ENCODE measurements at regions of chr1 and their contacts with region 1.

Region 1: DNA sequence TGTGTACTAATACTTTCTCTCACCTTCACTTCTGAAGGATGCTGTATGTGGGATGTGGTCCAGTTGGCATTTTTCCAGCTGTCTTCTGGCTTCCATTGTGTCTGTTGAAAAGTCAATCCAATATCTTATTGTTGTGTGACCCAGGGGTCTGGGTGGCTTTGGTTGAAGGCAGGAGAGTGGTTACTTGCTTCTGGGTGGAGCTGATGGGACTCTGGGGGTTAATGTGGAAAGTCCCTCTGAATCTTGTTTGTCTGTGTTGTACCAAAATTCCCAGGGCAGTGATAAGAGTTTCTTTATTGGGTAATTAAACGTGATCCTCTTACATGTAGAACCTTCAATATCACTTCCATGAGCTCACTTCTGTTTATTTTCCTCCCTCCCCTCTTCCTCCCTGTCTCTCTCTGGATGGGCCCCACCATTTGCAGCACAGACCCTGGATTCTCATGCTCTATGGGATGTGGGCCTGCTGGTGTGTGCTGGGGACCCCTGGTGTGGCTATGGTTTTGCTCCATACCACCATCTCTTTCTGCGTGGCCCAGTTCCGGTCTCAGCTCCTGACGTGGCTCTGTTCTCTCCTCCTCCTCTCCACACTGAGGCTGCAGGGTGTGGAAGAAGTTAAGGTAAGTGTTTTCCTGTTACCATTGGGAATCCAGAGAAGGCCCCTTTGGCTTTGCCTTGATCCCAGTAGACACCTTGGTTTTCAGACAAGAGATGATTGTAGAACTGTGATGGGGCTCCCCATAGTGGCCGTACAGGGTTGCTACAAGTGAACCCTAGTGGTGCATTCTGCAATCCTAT is 71.5 kb downstream of the HHAT start:
- DNase-seq: peak; percentile 56
- H3K4me3 ChIP-seq: no peak overlapping the region
- H3K27ac ChIP-seq: no peak overlapping the region
- H3K4me1 ChIP-seq: no peaks in the 10 kb centered on the region
- H3K27me3 ChIP-seq: no peaks in the 10 kb centered on the region
- CTCF ChIP-seq: peak; percentile 66

Region 2: DNA sequence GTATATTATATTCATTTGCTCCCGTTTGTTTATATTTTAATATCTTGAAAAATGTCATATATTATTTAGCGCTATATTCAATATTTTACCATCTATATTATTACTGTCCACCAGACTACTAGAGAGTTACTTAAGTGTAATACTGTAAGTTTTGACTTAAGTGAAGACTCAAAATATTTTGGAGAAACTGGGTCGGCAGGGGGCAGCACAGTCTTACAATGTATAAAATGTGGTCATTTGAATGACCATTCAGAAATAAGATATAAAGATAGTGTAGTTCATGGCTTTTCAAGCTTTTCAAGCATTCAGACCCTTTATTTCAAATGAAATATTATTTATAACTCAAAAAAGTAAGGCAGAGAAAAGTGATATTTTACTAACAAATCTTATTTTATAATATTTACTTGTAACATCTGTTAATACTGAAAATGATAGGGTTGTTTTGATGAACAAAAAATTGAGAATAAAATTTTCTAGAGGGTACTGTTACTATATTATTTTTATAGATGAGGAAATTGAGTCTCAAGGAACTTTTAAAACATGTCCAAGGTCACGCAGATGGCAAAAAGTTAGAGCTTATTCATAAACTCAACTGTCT is 256.7 kb before region 1 on chr1:
- intact Hi-C with region 1: loop called (anchors 5 kb)
- DNase-seq: peak; percentile 80
- H3K4me3 ChIP-seq: no peak overlapping the region
- H3K27ac ChIP-seq: no peak overlapping the region
- H3K4me1 ChIP-seq: no peaks in the 10 kb centered on the region
- H3K27me3 ChIP-seq: no peaks in the 10 kb centered on the region
- CTCF ChIP-seq: peak; percentile 70

Region 3: DNA sequence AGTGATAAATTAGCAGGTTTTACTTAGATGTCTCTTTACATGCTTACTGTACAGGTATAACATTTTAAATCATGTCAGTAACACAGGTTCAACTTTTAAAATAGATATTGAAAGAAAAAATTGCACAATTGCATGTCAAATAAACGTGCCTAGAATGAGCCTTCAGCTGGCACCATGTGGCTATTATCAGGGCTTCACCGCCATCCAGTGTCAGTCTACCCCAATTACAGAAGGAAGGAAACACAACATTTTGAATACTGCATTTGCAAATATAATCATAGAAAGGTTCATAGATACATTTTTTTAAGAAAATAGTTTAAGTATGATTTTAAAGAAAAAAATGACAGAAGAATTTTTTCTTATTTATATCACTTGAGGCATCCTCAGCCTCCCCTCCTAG is 215.2 kb before region 1 on chr1:
- intact Hi-C with region 1: no loop called
- DNase-seq: no peak
- H3K4me3 ChIP-seq: no peak overlapping the region
- H3K27ac ChIP-seq: no peak overlapping the region
- H3K4me1 ChIP-seq: no peaks in the 10 kb centered on the region
- H3K27me3 ChIP-seq: no peaks in the 10 kb centered on the region
- CTCF ChIP-seq: no peak

Region 4: GRCh38 chr1:210311726-210312493 is 88.3 kb before region 1 on chr1:
- intact Hi-C with region 1: loop called (anchors 5 kb)
- DNase-seq: no peak
- H3K4me3 ChIP-seq: no peak overlapping the region
- H3K27ac ChIP-seq: no peak overlapping the region
- H3K4me1 ChIP-seq: no peaks in the 10 kb centered on the region
- H3K27me3 ChIP-seq: no peaks in the 10 kb centered on the region
- CTCF ChIP-seq: no peak

Region 5: DNA sequence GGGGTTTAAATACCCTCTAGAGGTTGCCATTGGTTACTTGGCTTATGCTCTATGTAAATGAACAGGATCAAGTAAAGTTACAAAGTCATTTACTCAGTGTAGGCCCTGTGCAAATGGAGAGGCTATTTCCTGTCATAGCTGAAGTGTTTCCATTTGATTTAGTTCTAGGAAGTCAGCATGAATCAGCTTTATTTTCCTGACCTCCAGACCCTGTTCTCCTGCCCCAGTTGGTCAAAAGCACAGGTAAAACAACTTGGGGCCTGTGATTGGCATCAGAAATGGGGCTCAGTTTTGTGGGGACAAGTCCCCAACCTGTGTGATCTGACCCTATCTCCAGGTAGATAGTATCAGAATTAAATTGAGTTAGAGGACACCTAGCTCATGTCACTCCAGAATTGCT is 168.4 kb after region 1 on chr1:
- intact Hi-C with region 1: no loop called
- DNase-seq: no peak
- H3K4me3 ChIP-seq: no peak overlapping the region
- H3K27ac ChIP-seq: no peak overlapping the region
- H3K4me1 ChIP-seq: no peaks in the 10 kb centered on the region
- H3K27me3 ChIP-seq: no peaks in the 10 kb centered on the region
- CTCF ChIP-seq: no peak

Region 6: DNA sequence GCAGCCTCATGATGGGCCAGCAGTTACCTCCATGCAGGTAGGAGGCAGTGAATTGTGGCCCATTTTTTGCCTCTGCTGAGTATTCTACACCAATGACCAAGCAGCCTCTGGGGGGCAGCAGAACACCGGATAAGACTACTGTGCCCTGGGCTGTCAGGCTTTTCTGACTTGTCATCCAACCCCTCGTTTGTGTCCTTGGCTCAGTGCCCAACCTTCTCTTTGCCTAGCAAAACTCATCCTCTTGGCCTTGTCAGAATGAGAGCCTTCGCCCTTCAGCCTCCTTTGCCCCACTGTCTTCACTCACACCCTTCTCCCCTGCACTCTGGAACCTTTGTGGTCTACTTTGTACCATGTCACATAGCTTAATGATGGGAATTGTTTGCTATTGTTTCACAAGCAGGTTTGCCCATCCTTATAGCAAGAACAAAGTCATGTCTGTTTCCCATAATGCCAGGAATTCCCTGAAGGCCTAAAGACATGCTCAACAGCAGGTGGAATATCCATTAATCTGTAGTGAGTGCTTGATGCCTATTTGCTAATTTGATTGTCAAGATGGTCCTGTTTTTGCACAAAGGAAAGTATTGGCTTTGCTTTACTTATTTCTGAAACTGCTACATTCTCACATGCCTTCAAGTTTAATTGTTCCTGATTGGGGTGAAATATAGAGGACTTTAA is 184.3 kb after region 1 on chr1:
- intact Hi-C with region 1: loop called (anchors 10 kb)
- DNase-seq: peak; percentile 77
- H3K4me3 ChIP-seq: no peak overlapping the region
- H3K27ac ChIP-seq: no peak overlapping the region
- H3K4me1 ChIP-seq: no peaks in the 10 kb centered on the region
- H3K27me3 ChIP-seq: no peaks in the 10 kb centered on the region
- CTCF ChIP-seq: peak; percentile 50